ENCODE measurements at regions of chr16 and their contacts with region 1.

Region 1: GRCh38 chr16:81616321-81617055 is 162.6 kb upstream of the PLCG2 start:
- DNase-seq: peak; percentile 73 to 87
- H3K4me3 ChIP-seq: no peak overlapping the region
- H3K27ac ChIP-seq: peak overlapping the region; percentile 44 to 70 (median 69)
- H3K4me1 ChIP-seq: peaks cover 28 to 68% (median 52%) of the 10 kb centered on the region in 4 donors
- H3K27me3 ChIP-seq: no peaks in the 10 kb centered on the region
- CTCF ChIP-seq: no peak
- EP300 ChIP-seq: no peak
- POLR2A ChIP-seq: no peak

Region 2: GRCh38 chr16:81723098-81723723 is 106.7 kb after region 1 on chr16:
- intact Hi-C with region 1: loop called (anchors 10 kb)
- DNase-seq: peak in 1 of 2 donors; percentile 92
- H3K4me3 ChIP-seq: no peak overlapping the region
- H3K27ac ChIP-seq: no peak overlapping the region
- H3K4me1 ChIP-seq: peaks cover 0 to 21% (median 12%) of the 10 kb centered on the region in 4 donors
- H3K27me3 ChIP-seq: no peaks in the 10 kb centered on the region
- CTCF ChIP-seq: peak in 5 of 7 experiments; percentile 53 to 79 (median 69)
- EP300 ChIP-seq: no peak
- POLR2A ChIP-seq: no peak